ENCODE measurements at regions of chr2 and their contacts with region 1.

Region 1: GRCh38 chr2:201642579-201643215 is 606 bp downstream of the TMEM237 start:
- DNase-seq: peak; percentile 88
- H3K4me3 ChIP-seq: peak overlapping the region; percentile 97
- H3K27ac ChIP-seq: peak overlapping the region; percentile 75
- H3K4me1 ChIP-seq: peaks cover 22% of the 10 kb centered on the region
- CTCF ChIP-seq: no peak

Region 2: GRCh38 chr2:201257956-201258665 is 384.6 kb before region 1 on chr2:
- CTCF ChIA-PET with region 1: no interaction called
- POLR2A ChIA-PET with region 1: no interaction called
- intact Hi-C with region 1: loop called (anchors 5 kb)
- DNase-seq: peak; percentile 84
- H3K4me3 ChIP-seq: peak overlapping the region; percentile 69
- H3K27ac ChIP-seq: peak overlapping the region; percentile 93
- H3K4me1 ChIP-seq: peaks cover 47% of the 10 kb centered on the region
- CTCF ChIP-seq: peak; percentile 18; the same call in 1 of the 2 replicates

Region 3: DNA sequence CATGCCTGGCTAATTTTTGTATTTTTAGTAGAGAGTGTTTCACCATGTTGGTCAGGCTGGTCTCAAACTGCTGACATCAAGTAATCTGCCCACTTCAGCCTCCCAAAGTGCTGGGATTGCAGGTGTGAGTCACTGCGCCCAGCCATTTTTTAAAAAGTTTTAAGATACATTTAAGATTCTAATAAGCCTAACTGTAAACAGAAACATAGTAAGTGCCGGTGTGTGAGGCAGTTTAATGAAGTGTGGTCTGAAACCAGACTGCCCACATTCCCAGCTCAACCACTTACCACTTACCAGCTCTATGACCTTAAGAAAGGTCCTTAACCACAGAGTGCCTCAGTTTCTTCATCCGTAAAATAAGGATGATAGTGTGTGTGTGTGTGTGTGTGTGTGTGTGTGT is 41.8 kb before region 1 on chr2:
- CTCF ChIA-PET with region 1: no interaction called
- POLR2A ChIA-PET with region 1: no interaction called
- intact Hi-C with region 1: no loop called
- DNase-seq: no peak
- H3K4me3 ChIP-seq: no peak overlapping the region
- H3K27ac ChIP-seq: no peak overlapping the region
- H3K4me1 ChIP-seq: no peaks in the 10 kb centered on the region
- CTCF ChIP-seq: no peak

Region 4: GRCh38 chr2:201786471-201786870 is 143.8 kb after region 1 on chr2:
- CTCF ChIA-PET with region 1: no interaction called
- POLR2A ChIA-PET with region 1: no interaction called
- intact Hi-C with region 1: no loop called
- DNase-seq: no peak
- H3K4me3 ChIP-seq: no peak overlapping the region
- H3K27ac ChIP-seq: no peak overlapping the region
- H3K4me1 ChIP-seq: peaks cover 5% of the 10 kb centered on the region
- CTCF ChIP-seq: no peak

Measured in OCI-LY7 (cell line).